Right ventricle myocardium inferior (tissue), 1 donor: ENCODE measurements at regions of chr4 and their contacts with region 1.

Region 1: GRCh38 chr4:183722731-183723560 is 63.9 kb downstream of the TRAPPC11 start:
- DNase-seq: peak; percentile 76
- ATAC-seq: peak; percentile 71

Region 2: GRCh38 chr4:183158062-183158461 is 564.9 kb before region 1 on chr4:
- intact Hi-C with region 1: no loop called
- DNase-seq: no peak
- ATAC-seq: no peak

Region 3: DNA sequence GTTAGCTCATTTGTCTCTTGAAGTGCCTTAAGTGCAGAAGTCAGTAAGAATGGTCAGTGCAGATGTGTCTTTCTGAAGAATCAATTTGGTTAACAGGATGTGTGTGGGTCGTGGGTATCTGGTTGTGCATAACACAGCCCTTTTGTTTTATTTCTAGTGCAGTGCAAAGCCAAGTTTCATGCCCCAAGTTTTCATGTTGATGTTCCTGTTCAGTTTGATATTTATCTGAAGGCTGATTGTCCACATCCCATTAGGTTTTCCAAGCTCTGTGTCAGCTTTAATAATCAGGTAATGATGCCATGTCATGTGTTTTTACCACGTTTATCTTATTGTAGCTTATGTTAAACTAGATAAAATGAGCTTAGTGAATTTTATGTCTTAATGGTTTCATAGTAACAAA is 36.5 kb before region 1 on chr4:
- intact Hi-C with region 1: no loop called
- DNase-seq: no peak
- ATAC-seq: no peak

Region 4: DNA sequence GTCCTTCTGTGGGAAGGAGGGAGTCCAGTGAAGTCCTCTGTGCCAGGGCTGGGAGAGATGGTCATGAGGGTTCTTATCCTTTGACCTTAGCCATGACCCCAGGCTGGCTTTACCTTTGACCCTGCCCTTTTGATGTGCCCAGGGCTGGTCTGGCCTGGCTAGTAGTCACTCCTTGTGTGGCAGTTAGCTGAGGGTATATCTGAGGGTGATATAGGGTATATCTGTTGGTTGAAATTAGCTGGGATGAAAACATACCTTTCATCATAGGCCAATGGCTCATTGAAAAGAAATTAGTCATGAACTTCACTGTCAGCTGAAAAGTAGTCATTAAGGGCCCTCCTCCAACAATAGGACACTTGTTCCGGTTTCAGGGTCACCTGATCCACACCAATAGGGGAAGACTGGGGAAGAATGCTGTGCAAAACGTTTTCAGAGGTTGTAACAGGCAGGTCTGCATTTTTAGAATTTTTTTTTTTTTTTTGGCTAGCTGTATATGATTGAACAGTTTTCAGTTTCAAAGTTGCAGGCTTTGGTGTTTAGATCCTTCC is 107.6 kb after region 1 on chr4:
- intact Hi-C with region 1: loop called (anchors 5 kb)
- DNase-seq: no peak
- ATAC-seq: peak; percentile 9

Region 5: GRCh38 chr4:184168406-184169019 is 445.6 kb after region 1 on chr4:
- intact Hi-C with region 1: loop called (anchors 10 kb)
- DNase-seq: peak; percentile 91
- ATAC-seq: peak; percentile 96